GM13976 (cell line): ENCODE measurements at regions of chr19 and their contacts with region 1.

Region 1: DNA sequence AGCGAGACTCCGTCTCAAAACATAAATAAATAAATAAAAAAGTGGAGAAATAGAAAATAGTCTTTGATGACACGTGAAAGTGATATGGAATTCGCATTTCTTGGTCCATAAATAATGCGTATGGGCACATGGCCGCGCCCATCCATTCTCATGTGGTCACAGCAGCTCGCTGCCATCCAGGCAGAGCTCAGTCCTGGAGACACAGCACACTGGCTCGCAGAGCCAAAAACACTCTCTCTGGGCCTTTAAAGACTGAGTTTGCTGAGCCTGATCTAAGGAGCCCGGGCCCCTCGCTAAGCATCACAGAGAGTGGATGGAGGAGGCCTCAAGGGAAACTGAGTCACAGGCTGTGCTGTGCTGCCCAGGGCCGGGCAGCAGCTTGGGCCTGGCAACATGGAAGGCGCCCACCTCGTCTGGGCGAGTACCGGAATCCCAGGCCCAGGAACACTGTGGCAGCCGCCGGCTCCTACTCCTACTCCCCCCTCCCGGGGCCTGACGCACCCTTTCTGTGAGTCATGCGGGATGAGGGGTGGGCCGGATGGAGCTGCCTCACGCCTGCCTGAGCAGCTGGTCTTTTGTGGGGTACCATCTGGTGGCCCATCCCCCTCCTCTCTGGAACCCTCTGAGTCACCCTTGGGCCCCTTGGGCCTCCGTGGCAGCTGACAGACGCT is 28.9 kb upstream of the CACTIN start:
- DNase-seq: no peak
- CTCF ChIP-seq: no peak

Region 2: DNA sequence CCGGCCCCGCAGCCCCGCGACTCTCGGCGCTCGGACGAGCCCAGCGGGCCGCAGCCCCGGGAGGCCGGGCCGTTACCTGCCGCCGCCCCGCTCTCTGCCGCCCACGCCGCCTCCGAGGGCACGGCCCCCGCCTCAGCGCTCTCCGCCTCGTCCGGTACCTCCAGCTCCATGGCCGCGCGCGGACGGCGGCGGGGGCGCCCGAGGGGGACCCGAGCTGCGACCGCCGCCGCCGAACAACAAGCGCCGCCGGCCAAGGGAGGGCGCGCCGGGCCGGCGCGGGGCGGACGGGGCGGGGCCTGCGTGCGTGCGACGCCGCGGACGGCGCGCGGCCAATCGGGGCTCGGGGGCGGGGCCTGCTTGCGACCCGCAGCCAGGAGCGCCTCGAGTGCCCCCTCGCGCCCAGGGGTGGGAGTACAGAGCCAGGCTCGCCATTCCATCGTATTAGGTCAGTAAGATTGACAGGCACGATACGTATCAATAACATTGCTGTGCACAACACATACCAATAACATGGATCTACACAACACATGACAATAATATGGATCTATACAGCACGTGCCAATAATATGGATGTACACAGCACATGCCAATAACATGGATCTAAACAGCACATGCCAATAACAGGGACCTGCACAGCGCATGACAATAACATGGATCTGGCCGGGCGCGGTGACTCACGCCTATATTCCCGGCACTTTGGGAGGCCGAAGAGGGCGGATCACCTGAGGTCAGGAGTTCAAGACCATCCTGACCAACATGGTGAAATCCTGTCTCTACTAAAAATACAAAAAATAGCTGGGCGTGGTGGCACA is 44.9 kb after region 1 on chr19 and contains the start of gene PIP5K1C:
- in situ Hi-C with region 1: loop called (anchors 10 kb)
- DNase-seq: peak; percentile 97
- CTCF ChIP-seq: peak; percentile 90